ENCODE measurements at regions of chr6 and their contacts with region 1.

Region 1: DNA sequence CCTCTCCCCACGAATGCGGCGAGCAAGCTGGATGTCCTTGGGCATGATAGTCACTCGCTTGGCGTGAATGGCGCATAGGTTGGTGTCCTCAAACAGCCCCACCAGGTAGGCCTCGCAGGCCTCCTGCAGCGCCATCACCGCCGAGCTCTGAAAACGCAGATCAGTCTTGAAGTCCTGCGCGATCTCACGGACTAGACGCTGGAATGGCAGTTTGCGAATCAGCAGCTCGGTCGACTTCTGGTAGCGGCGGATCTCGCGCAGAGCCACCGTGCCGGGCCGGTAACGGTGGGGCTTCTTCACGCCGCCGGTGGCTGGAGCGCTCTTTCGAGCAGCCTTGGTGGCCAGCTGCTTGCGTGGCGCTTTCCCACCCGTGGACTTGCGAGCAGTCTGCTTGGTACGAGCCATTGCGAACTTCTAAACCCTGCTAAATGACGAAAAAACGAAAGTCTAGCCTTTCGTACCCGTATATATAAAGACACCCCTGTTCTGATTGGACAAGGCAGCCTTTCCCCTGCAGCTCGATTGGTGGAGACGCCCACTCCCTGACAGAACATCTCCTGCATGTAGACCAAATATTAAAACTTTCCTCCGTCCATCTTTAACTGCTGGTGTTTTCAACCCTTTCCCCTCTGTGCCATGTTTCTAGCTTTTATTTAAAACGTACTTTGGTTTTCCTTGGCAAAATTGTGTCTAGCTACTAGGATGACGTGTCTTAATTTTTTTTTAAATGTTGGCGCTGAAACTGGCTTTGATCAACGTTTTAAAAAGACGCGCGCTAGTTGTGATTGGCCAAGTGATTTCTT is 109.8 kb downstream of the HFE start:
- DNase-seq: peak; percentile 93
- ATAC-seq: peak; percentile 48
- H3K4me3 ChIP-seq: peak overlapping the region; percentile 93
- H3K27ac ChIP-seq: peak overlapping the region; percentile 70
- H3K4me1 ChIP-seq: peaks cover 17% of the 10 kb centered on the region; the same call in 1 of the 2 replicates
- H3K27me3 ChIP-seq: no peaks in the 10 kb centered on the region
- CTCF ChIP-seq: no peak; the same call in 1 of the 2 replicates

Region 2: DNA sequence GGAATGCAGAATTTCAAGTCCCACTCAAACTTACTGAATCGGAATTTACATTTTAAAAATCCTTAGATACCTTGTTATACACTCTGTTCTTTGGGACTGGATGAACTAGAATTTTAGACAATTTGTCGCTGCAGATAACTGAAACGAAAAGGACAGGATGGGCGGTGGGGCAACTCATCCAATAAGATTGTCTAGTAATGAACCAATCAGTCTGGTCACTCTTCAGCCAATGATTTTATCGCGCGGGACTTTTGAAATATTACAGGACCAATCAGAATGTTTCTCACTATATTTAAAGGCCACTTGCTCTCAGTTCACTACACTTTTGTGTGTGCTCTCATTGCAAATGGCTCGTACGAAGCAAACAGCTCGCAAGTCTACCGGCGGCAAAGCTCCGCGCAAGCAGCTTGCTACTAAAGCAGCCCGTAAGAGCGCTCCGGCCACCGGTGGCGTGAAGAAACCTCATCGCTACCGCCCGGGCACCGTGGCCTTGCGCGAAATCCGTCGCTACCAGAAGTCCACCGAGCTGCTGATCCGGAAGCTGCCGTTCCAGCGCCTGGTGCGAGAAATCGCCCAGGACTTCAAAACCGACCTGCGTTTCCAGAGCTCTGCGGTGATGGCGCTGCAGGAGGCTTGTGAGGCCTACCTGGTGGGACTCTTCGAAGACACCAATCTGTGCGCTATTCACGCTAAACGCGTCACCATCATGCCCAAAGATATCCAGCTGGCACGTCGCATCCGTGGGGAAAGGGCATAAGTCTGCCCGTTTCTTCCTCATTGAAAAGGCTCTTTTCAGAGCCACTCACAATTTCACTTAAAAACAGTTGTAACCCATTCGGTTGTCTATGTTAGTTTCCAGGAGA is 151.8 kb before region 1 on chr6:
- CTCF ChIA-PET with region 1: no interaction called
- POLR2A ChIA-PET with region 1: interaction called, 7 read pairs
- intact Hi-C with region 1: loop called (anchors 2 kb)
- DNase-seq: peak; percentile 98
- ATAC-seq: peak; percentile 57
- H3K4me3 ChIP-seq: peak overlapping the region; percentile 71
- H3K27ac ChIP-seq: peak overlapping the region; percentile 74
- H3K4me1 ChIP-seq: peaks cover 21% of the 10 kb centered on the region
- H3K27me3 ChIP-seq: no peaks in the 10 kb centered on the region
- CTCF ChIP-seq: peak; percentile 36; the same call in 1 of the 2 replicates

Region 3: DNA sequence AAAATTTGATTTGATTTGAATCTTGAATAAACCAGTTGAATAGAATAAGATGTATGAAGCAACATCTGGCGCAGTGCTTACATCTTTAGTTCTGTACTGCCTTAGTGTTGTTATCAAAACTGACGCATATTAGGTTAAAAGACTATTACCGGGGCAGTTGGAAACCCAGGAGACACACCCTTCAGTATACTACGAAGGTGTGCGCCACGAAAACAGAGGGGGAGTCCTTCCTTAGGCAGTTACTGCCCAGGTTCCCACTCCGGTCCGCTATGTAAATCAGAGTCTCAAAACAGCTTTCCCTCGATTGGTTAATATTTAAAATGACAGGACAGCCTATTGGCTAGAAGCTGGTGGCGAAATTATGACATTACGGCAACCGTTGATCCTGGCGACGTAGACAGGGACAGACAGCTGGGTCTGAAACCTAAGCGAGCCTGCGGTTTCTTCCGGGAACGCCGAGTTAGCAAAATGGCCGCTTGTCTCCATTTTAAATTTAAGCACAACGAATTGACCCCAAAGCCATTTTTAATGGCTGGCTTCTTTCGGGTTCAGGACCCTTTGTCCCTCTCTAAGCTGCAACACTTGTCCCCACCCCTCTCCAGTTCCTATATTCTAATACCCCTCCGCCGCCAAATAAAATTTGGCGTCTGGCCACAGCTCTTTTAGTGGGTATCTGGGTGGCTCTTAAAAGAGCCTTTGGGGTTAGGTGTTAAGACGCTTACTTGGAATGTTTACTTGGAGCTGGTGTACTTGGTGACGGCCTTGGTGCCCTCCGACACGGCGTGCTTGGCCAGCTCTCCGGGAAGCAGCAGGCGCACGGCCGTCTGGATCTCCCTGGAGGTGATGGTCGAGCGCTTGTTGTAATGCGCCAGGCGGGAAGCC is 74.0 kb before region 1 on chr6:
- CTCF ChIA-PET with region 1: interaction called, 3 read pairs
- POLR2A ChIA-PET with region 1: interaction called, 93 read pairs
- intact Hi-C with region 1: loop called (anchors 1 kb)
- DNase-seq: peak; percentile 99
- ATAC-seq: peak; percentile 50
- H3K4me3 ChIP-seq: peak overlapping the region; percentile 96
- H3K27ac ChIP-seq: peak overlapping the region; percentile 94
- H3K4me1 ChIP-seq: peaks cover 49% of the 10 kb centered on the region
- H3K27me3 ChIP-seq: no peaks in the 10 kb centered on the region
- CTCF ChIP-seq: no peak

Region 4: GRCh38 chr6:26216356-26216885 is 19.4 kb after region 1 on chr6:
- CTCF ChIA-PET with region 1: no interaction called
- POLR2A ChIA-PET with region 1: interaction called, 68 read pairs
- intact Hi-C with region 1: loop called (anchors 1 kb)
- DNase-seq: peak; percentile 99
- ATAC-seq: peak; percentile 64
- H3K4me3 ChIP-seq: peak overlapping the region; percentile 86
- H3K27ac ChIP-seq: peak overlapping the region; percentile 63
- H3K4me1 ChIP-seq: peaks cover 6% of the 10 kb centered on the region; the same call in 1 of the 2 replicates
- H3K27me3 ChIP-seq: no peaks in the 10 kb centered on the region
- CTCF ChIP-seq: no peak

Region 5: GRCh38 chr6:26249957-26250697 is 53.1 kb after region 1 on chr6:
- CTCF ChIA-PET with region 1: interaction called, 4 read pairs
- POLR2A ChIA-PET with region 1: interaction called, 11 read pairs
- intact Hi-C with region 1: no loop called
- DNase-seq: peak; percentile 79
- ATAC-seq: peak; percentile 52
- H3K4me3 ChIP-seq: peak overlapping the region; percentile 69
- H3K27ac ChIP-seq: peak overlapping the region; percentile 73
- H3K4me1 ChIP-seq: no peaks in the 10 kb centered on the region
- H3K27me3 ChIP-seq: no peaks in the 10 kb centered on the region
- CTCF ChIP-seq: peak; percentile 28; the same call in 1 of the 2 replicates

Region 6: GRCh38 chr6:26312501-26313390 is 115.7 kb after region 1 on chr6:
- CTCF ChIA-PET with region 1: no interaction called
- POLR2A ChIA-PET with region 1: no interaction called
- intact Hi-C with region 1: no loop called
- DNase-seq: peak; percentile 91
- ATAC-seq: peak; percentile 70
- H3K4me3 ChIP-seq: peak overlapping the region; percentile 73
- H3K27ac ChIP-seq: peak overlapping the region; percentile 49
- H3K4me1 ChIP-seq: peaks cover 24% of the 10 kb centered on the region
- H3K27me3 ChIP-seq: no peaks in the 10 kb centered on the region
- CTCF ChIP-seq: no peak

Region 7: DNA sequence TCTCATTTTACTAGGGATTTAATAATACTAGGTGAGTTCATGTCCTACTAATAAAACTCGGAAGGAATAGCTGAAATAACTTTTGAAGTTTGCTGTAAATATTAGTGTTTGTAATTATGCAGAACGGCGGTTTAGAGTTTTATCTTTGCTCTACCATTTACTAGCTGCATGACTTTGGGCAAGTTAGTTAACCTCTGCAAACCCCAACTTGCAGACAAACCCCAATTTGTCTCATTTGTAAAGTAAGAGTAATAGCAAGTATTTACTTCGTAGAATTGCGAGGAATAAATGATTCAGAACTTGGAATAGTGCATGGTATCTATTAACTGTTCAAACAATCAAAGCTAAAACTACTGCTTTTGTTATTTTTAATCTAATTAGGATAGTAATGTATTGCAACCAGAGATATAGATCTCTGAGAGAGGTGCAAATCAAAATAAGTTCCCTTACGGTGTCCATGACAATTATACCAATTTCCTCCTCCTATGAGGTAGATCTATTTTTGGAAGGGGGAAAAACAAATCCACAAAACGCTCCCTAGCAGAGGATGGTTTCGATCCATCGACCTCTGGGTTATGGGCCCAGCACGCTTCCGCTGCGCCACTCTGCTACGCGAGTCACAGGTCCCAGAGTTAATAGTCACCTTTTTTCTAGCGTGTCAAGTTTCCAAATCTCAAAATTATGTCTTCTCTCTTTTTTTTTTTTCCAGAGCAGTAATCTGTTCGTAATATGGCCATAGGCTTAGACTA is 132.9 kb after region 1 on chr6:
- CTCF ChIA-PET with region 1: no interaction called
- POLR2A ChIA-PET with region 1: no interaction called
- intact Hi-C with region 1: no loop called
- DNase-seq: peak; percentile 83
- ATAC-seq: peak; percentile 44
- H3K4me3 ChIP-seq: peak overlapping the region; percentile 86
- H3K27ac ChIP-seq: no peak overlapping the region
- H3K4me1 ChIP-seq: peaks cover 16% of the 10 kb centered on the region; the same call in 1 of the 2 replicates
- H3K27me3 ChIP-seq: no peaks in the 10 kb centered on the region
- CTCF ChIP-seq: no peak

Region 8: GRCh38 chr6:26651133-26651781 is 454.2 kb after region 1 on chr6:
- CTCF ChIA-PET with region 1: no interaction called
- POLR2A ChIA-PET with region 1: no interaction called
- intact Hi-C with region 1: no loop called
- DNase-seq: no peak
- ATAC-seq: no peak
- H3K4me3 ChIP-seq: no peak overlapping the region
- H3K27ac ChIP-seq: no peak overlapping the region
- H3K4me1 ChIP-seq: no peaks in the 10 kb centered on the region
- H3K27me3 ChIP-seq: no peaks in the 10 kb centered on the region
- CTCF ChIP-seq: no peak

Region 9: DNA sequence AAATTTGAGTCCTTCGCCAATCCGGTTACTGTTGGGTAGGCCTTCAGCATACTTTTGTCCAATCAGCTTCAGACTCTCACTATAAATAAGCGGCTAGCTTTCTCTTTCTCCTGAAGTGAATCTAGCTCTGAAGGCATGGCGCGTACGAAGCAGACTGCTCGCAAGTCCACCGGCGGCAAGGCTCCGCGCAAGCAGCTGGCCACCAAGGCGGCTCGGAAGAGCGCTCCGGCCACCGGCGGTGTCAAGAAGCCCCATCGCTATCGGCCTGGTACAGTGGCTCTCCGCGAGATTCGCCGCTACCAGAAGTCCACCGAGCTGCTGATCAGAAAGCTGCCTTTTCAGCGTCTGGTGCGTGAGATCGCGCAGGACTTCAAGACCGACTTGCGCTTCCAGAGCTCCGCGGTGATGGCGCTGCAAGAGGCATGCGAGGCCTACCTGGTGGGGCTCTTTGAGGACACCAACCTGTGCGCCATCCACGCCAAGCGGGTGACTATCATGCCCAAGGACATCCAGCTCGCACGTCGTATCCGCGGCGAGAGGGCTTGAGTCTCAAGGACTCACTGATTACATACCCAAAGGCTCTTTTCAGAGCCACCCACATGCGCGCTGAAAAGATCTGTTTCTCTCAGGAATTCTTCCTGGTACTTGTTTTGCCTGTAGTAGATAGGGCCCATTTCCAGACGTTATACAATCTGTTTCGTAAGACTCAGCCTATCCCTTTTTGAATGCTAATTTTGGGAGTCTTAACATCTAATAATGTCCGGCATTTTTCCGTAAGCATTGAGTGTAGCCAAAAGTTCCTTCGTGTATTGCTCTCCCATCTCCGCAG is 1613.1 kb after region 1 on chr6:
- CTCF ChIA-PET with region 1: no interaction called
- POLR2A ChIA-PET with region 1: interaction called, 16 read pairs
- intact Hi-C with region 1: loop called (anchors 5 kb)
- DNase-seq: peak; percentile 99
- ATAC-seq: peak; percentile 28
- H3K4me3 ChIP-seq: peak overlapping the region; percentile 76
- H3K27ac ChIP-seq: peak overlapping the region; percentile 65
- H3K4me1 ChIP-seq: peaks cover 28% of the 10 kb centered on the region
- H3K27me3 ChIP-seq: no peaks in the 10 kb centered on the region
- CTCF ChIP-seq: 0 out of 2 replicates have a peak, but pooled peaks have one; percentile 14

Measured in PC-3 (cell line).